IMR-90 (cell line): ENCODE measurements at regions of chr18 and their contacts with region 1.

Region 1: DNA sequence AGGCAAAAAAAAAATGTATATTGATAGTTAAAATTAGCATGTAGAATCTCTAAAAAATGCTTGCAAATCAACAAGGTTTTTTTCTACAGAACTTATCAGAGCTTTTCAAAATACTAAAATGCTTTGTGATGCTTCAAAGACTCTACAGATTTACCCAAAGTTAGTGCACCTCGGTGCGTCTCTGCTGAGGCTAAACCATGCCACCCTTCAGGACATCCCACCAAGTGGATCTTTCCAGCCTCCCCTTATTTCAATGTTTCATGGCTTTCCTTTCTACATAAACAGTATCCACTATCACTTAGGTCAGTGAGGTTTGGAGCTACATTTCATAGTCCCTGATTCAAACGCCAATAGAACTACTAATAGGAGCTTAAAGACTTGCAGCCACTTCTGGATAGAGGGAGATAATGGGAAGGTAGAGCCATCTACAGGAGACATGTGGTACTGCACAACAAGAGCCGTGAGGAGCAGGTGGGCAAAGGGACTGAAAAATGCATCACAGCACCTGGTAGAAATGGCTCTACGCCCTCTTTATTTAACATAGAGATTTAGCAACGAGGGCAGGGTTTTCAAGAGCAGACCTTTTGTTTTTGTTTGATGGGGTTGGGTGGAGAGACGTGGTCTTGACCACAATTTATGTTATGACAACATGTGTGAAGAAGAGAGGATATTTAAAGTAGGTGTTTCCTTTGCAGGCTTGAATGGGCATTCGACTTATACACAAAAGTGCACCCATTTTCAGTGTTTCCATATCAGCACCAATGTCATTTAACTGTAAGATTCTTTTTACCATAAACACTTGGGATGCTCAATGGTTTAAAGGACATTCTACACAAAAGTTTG is 56.1 kb upstream of the SLC35G4 start:
- DNase-seq: peak; percentile 59
- ATAC-seq: peak; percentile 99
- H3K4me3 ChIP-seq: no peak overlapping the region
- H3K27ac ChIP-seq: no peak overlapping the region
- H3K4me1 ChIP-seq: no peaks in the 10 kb centered on the region
- H3K27me3 ChIP-seq: peaks cover 9% of the 10 kb centered on the region
- CTCF ChIP-seq: peak; percentile 86
- POLR2A ChIP-seq: no peak
- RAD21 ChIP-seq: peak; percentile 89

Region 2: GRCh38 chr18:10588975-10589374 is 964.3 kb before region 1 on chr18:
- CTCF ChIA-PET with region 1: no interaction called
- POLR2A ChIA-PET with region 1: no interaction called
- dilution Hi-C with region 1: no loop called
- in situ Hi-C with region 1: no loop called
- intact Hi-C with region 1: no loop called
- DNase-seq: peak; percentile 18
- ATAC-seq: no peak
- H3K4me3 ChIP-seq: no peak overlapping the region
- H3K27ac ChIP-seq: no peak overlapping the region
- H3K4me1 ChIP-seq: no peaks in the 10 kb centered on the region
- H3K27me3 ChIP-seq: no peaks in the 10 kb centered on the region
- CTCF ChIP-seq: no peak
- POLR2A ChIP-seq: no peak
- RAD21 ChIP-seq: no peak

Region 3: DNA sequence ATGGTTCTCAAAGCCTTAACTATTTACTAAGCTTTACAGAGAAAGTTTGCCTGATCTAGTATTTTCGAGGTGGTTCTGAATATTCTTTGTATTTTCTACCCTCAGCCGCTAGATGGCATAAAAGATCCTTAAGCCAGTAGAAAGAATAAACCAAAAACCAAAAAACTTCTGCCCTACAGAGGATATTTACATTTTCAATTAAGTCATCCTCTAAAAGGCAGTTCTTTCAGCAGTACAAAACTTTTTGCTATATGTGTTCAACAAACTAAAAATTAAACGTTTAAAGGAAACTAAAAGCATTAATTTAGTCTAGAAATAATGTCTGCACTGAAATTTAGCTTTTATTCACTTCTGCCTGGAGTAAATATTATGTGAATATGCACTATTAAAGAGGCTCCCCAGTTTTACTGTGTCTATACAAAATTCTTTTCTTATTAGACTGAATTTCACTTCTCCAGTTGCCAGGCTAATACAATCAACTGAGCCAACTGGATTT is 701.4 kb before region 1 on chr18:
- CTCF ChIA-PET with region 1: interaction called, 3 read pairs
- POLR2A ChIA-PET with region 1: no interaction called
- dilution Hi-C with region 1: no loop called
- in situ Hi-C with region 1: loop called (anchors 10 kb)
- intact Hi-C with region 1: loop called (anchors 1 kb)
- DNase-seq: peak; percentile 81
- ATAC-seq: peak; percentile 90
- H3K4me3 ChIP-seq: no peak overlapping the region
- H3K27ac ChIP-seq: peak overlapping the region; percentile 50; the same call in 1 of the 2 replicates
- H3K4me1 ChIP-seq: peaks cover 2% of the 10 kb centered on the region; the same call in 1 of the 2 replicates
- H3K27me3 ChIP-seq: no peaks in the 10 kb centered on the region
- CTCF ChIP-seq: peak; percentile 93
- POLR2A ChIP-seq: no peak
- RAD21 ChIP-seq: peak; percentile 93